ENCODE measurements at regions of chr13 and their contacts with region 1.

Region 1: DNA sequence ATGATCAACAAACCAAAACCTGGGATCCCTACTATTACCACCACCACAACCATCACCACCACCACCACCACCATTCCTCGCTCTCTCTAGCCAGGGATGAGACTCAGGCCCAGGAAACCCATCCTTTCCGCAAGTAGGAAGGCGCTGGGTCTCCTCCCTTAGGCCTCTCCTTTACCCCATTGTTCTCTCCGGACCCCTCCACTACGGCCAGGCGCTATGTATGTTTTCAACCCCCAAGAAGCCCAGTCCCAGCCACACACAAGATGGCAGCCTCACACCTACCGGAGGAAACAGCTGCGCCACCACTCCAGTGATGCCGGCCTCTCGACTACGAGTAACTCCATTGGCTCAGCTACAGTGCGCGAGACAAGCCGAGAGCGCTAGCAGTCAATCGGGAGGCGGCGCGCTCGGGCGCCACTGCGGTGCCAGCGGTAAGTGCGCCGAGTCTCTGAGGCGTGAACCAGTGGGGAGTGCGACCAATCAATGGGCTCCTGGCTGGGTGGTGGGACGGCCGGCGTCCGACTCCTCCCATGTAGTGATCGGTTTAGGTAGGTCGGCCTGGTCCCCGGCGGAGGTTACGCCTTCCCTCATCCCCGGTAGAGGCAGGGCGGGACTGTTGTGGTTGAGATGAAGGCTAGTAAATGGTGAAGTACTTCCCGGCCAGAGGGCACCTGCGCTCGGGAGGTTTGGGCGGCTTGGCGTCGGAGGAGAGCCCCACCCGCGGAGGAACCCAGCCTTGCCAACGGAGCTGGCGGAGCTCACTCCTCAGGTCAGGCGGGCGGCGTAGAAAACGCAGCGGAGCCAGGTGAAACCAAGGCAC is at the starts of genes CAB39L and SETDB2:
- DNase-seq: peak; percentile 99
- H3K4me3 Mint-ChIP-seq: peak within 1 kb of the TSS; percentile 95
- H3K27ac Mint-ChIP-seq: peak within 1 kb of the TSS; percentile 99
- H3K4me1 Mint-ChIP-seq: peaks cover 49% of the 10 kb centered on the region
- H3K27me3 Mint-ChIP-seq: peaks cover 8% of the 10 kb centered on the region
- total RNA-seq, gene CAB39L: 4.0 and 5.8 TPM in 2 replicates
- total RNA-seq, gene SETDB2: 10.8 and 11.0 TPM in 2 replicates

Region 2: GRCh38 chr13:48975856-48976575 is 467.9 kb before region 1 on chr13 and contains the start of gene FNDC3A:
- intact Hi-C with region 1: loop called (anchors 10 kb)
- DNase-seq: peak; percentile 87
- H3K4me3 Mint-ChIP-seq: peak within 1 kb of the TSS; percentile 96
- H3K27ac Mint-ChIP-seq: peak within 1 kb of the TSS; percentile 98
- H3K4me1 Mint-ChIP-seq: peaks cover 34% of the 10 kb centered on the region
- H3K27me3 Mint-ChIP-seq: no peaks in the 10 kb centered on the region
- total RNA-seq, gene FNDC3A: 21.0 and 21.7 TPM in 2 replicates

Region 3: DNA sequence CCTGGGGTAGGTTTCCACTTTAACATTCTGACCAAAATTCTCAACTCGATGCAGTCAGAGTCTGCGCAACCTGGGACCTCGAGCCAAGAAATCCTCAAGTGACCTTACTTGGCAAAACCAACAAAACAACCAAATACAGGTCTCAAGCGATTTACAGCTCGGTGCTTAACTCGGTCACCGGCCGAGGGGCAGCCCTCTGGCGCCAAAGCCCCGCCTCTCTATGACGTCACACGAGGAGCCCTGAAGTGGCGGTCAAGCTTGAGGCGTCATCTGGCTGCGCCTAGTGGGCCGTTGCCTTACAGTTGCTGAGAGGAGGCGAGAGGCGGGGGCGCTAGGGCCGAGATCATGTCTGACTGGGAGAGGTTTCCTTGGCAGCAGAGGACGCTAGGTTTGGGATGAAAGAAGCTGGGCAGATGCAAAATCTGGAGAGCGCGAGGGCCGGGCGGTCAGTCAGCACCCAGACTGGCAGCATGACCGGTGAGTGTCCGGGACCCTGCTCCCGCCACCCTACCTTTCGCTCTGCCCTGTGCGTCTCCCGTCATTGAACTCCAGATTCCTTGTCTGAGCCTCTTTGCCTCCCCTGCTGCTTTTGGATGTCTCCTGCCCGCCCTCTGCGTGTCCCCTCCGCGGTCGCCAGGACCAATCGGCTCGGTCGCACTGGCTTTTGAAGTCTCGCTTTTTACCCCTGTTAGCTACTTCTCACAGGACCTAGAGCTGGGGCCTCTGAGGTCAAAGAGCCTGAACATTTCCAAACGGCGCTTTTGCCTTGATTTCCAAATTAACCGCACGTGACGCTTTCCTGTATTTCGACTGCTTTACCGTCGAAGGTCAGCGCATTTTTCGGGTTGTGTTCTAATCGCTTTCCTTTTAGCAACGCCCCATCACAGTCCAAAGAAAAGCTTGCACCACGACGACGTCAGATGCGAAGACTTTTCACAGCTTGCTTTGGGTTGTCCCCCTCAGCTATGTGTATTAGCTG is 196.0 kb before region 1 on chr13 and contains the start of gene CDADC1:
- intact Hi-C with region 1: loop called (anchors 5 kb)
- DNase-seq: peak; percentile 88
- H3K4me3 Mint-ChIP-seq: peak within 1 kb of the TSS; percentile 93
- H3K27ac Mint-ChIP-seq: peak within 1 kb of the TSS; percentile 96
- H3K4me1 Mint-ChIP-seq: peaks cover 26% of the 10 kb centered on the region
- H3K27me3 Mint-ChIP-seq: peaks cover 11% of the 10 kb centered on the region
- total RNA-seq, gene CDADC1: 7.4 and 8.6 TPM in 2 replicates

Region 4: DNA sequence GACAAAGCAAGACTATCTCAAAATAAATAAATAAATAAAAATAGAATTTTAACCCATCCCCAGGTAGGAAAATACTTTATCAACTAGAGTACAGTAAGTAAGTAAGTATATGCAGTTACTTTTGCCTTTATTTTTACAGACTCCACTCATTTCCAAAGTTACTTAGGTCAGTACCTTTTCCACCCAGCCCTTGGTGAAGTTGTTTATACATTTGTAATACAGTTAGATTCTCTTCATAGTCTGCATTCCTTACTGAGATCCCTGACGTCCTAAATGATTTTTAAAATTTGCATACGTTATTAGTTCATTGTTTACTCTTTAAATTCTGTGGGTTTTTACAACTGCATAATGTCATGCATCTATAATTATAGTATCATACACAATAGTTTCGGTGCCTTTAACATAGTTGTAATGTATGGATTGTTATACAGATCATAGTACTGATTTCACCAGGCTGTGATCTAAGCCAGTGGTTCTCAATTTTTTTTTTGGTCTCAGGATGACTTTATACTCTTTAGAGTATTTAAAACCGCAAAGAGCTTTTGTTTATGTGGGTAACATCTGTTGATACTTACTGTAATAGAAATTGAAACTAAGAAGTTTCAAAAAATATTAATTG is 10.6 kb after region 1 on chr13:
- intact Hi-C with region 1: loop called (anchors 1 kb)
- DNase-seq: no peak
- H3K4me3 Mint-ChIP-seq: no peak overlapping the region
- H3K27ac Mint-ChIP-seq: peak overlapping the region; percentile 25
- H3K4me1 Mint-ChIP-seq: peaks cover 25% of the 10 kb centered on the region
- H3K27me3 Mint-ChIP-seq: no peaks in the 10 kb centered on the region

Region 5: GRCh38 chr13:49585220-49586157 is 141.6 kb after region 1 on chr13 and contains the start of gene RCBTB1:
- intact Hi-C with region 1: loop called (anchors 10 kb)
- DNase-seq: peak; percentile 68
- H3K4me3 Mint-ChIP-seq: peak within 1 kb of the TSS; percentile 99
- H3K27ac Mint-ChIP-seq: peak within 1 kb of the TSS; percentile 96
- H3K4me1 Mint-ChIP-seq: peaks cover 33% of the 10 kb centered on the region
- H3K27me3 Mint-ChIP-seq: peaks cover 2% of the 10 kb centered on the region
- total RNA-seq, gene RCBTB1: 13.5 and 16.0 TPM in 2 replicates

Region 6: GRCh38 chr13:49681842-49682435 is 238.0 kb after region 1 on chr13:
- intact Hi-C with region 1: loop called (anchors 10 kb)
- DNase-seq: no peak
- H3K4me3 Mint-ChIP-seq: no peak overlapping the region
- H3K27ac Mint-ChIP-seq: no peak overlapping the region
- H3K4me1 Mint-ChIP-seq: peaks cover 14% of the 10 kb centered on the region
- H3K27me3 Mint-ChIP-seq: no peaks in the 10 kb centered on the region

Region 7: DNA sequence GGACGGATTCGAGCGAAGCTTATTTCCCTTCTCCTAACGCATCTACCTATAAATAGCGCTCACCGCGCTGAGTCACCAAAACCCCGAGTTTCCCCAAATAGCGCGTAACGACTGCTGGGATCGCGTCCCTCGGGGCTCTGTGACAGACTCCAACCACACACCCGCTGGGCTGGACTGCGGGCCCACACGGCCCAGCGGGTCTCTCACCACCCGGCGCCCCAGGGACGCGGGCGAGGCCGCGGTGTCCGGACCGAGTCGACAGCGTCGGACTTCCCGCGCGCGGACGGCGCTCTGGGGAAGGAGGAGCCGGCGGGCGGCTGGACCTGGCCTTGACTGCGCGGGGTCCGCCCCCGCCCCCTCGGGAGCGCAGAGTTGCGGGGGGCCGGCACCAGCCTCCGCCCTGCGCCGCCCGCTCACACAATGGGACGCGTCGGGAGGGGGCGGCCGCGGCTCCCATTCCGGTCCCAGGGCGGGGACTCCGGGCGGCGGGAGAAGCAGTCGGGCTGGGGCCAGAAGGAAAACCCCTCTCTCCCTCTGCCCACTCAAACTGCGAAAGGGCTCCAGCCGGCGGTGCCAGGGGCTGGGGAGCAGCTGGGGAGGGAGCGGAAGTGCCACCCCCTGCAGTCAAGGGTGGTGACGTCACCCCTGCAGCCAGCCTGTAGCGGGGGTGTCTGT is 680.1 kb after region 1 on chr13:
- intact Hi-C with region 1: loop called (anchors 5 kb)
- DNase-seq: peak; percentile 58
- H3K4me3 Mint-ChIP-seq: peak overlapping the region; percentile 78
- H3K27ac Mint-ChIP-seq: peak overlapping the region; percentile 80
- H3K4me1 Mint-ChIP-seq: peaks cover 32% of the 10 kb centered on the region
- H3K27me3 Mint-ChIP-seq: peaks cover 29% of the 10 kb centered on the region